Dorsolateral prefrontal cortex (tissue), 120 donors: ENCODE measurements at regions of chr7 and their contacts with region 1.

Region 1: GRCh38 chr7:94004024-94004951 is at the start of gene BET1:
- DNase-seq: peak; percentile 92 to 96 (median 94)
- H3K4me3 ChIP-seq: peak within 1 kb of the TSS; percentile 63 to 98 (median 88)
- H3K27ac ChIP-seq: peak within 1 kb of the TSS in 51 of 59 donors; percentile 4 to 94 (median 76)
- H3K27me3 ChIP-seq: no peaks in the 10 kb centered on the region
- CTCF ChIP-seq: peak in 31 of 56 donors; percentile 17 to 62 (median 34)
- total RNA-seq, gene BET1: 12.0 to 27.8 (median 19.9) TPM

Region 2: GRCh38 chr7:93231799-93232672 is 772.3 kb before region 1 on chr7 and contains the start of gene VPS50:
- intact Hi-C with region 1: loop called in 1 of 2 experiments (anchors 10 kb)
- DNase-seq: peak; percentile 90 to 99 (median 97)
- H3K4me3 ChIP-seq: peak within 1 kb of the TSS; percentile 62 to 96 (median 83)
- H3K27ac ChIP-seq: peak within 1 kb of the TSS in 45 of 59 donors; percentile 7 to 86 (median 66)
- H3K27me3 ChIP-seq: no peaks in the 10 kb centered on the region
- CTCF ChIP-seq: peak in 49 of 56 donors; percentile 13 to 70 (median 45)
- total RNA-seq, gene VPS50: 37.5 to 82.2 (median 61.8) TPM

Region 3: GRCh38 chr7:93935112-93935511 is 69.2 kb before region 1 on chr7:
- intact Hi-C with region 1: no loop called
- DNase-seq: no peak
- H3K4me3 ChIP-seq: no peak overlapping the region
- H3K27ac ChIP-seq: no peak overlapping the region
- H3K27me3 ChIP-seq: peaks cover 0 to 5% (median 0%) of the 10 kb centered on the region in 45 donors
- CTCF ChIP-seq: no peak

Region 4: GRCh38 chr7:94069162-94069739 is 65.0 kb after region 1 on chr7:
- intact Hi-C with region 1: no loop called
- DNase-seq: no peak
- H3K4me3 ChIP-seq: no peak overlapping the region
- H3K27ac ChIP-seq: no peak overlapping the region
- H3K27me3 ChIP-seq: peaks cover 0 to 22% (median 0%) of the 10 kb centered on the region in 45 donors
- CTCF ChIP-seq: no peak